ENCODE measurements at regions of chr10 and their contacts with region 1.

Region 1: GRCh38 chr10:43606322-43607198 is at the start of gene ZNF485:
- DNase-seq: peak; percentile 81
- total RNA-seq, gene ZNF485: 1.7 TPM

Region 2: GRCh38 chr10:43524434-43525247 is 81.9 kb before region 1 on chr10:
- intact Hi-C with region 1: no loop called
- DNase-seq: no peak

Region 3: DNA sequence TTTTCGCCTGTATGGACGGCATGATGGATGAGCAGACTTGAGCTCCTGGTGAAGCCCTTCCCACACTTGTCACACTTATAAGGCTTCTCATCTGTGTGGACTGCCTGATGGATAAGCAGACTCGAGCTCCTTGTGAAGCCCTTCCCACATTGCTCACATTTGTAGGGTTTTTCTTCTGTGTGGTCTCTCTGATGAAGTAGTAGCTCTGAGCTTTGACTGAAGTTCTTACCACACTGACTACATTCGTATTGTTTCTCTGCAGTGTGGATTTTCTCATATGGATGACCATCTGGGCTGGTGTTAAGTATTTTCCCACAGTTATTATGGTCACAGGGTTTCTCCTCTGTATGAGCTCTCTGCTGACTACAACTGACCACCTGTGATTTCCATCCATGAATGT is 49.3 kb before region 1 on chr10:
- intact Hi-C with region 1: no loop called
- DNase-seq: no peak

Region 4: DNA sequence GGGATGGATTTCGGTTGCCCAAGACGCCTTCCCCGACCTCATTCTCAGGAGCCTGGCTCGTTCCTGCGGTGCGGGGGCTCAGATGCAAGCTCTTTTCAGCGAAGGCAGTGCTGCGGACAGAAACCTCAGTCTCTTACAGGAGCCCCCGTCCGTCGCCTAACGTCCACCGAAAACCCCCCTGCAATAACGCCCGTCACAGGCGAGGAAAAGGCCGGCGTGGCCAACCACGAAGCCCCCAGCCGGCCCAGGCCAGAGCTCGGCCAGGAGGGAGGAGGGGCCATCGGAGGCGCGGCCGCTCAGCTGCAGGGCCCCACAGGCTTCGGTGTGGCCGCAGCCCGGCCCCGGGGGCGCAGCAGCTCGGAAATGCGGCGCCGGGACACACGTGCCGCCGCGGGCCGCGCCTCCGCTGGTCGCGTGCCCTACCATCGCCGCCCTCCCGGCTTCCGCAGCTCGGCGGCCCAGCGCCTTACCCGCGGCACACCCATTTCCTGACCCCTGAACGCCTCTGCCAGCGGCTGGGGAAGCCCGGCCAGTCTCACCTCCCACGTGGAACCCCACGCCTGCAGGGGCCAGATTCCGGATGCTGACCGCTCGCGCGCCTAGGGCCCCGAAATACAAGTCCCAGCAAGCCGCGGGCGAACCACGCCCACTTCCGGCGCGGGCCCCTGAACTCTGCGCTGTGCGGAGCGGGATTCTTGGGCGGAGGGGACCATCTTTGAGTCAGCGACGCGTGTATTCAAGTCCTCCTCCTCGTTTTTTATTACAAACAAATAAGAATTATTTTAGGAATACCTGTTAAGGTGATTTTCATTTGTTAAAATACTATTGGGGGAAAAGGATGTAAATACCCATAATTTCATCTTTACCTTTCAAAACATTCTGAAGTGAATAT is 32.3 kb before region 1 on chr10 and contains the start of gene ZNF239:
- intact Hi-C with region 1: loop called (anchors 2 kb)
- DNase-seq: peak; percentile 90
- total RNA-seq, gene ZNF239: 1.7 TPM

Region 5: GRCh38 chr10:43707770-43708169 is 101.2 kb after region 1 on chr10:
- intact Hi-C with region 1: no loop called
- DNase-seq: peak; percentile 86

Measured in cardiac septum (tissue), 1 donor.